ENCODE measurements at regions of chr15 and their contacts with region 1.

Region 1: DNA sequence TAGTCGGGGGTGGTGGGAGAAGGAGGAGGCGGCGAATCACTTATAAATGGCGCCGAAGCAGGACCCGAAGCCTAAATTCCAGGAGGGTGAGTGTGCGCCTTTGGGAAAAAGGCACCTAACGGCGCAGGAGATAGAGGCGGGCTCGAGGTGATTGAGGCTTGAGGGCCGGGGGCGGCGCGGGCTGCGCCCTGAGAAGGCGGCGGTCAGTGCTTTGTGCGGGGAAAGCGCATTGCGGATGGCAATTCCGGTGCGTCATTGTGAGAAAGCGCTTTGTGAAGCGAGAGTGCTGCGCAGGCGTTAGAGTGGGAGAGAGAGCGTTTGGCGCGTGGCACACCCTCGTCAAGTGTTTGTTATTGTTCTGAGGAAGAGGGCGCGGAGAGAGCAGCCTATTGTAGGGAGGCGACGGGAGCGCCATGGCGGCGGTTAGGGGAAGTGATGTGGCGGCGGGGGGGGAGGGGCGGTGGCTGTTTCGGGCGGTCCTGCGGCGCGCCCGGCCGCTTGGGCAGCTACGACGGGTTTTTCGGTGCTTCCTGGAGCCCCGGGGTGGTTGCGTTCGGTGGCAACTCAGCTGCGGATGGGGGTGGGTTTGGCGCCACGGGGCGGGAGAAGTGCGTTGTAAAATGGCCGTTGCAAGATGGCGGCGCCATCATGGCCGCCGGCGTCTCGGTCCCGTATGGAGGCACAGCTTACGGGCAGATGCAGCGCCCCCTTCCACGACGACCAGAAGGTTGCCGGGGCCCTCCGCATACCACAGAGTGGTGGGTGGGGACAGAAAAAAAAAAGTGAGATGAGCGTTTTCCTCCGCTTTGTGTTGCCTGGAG is 492 bp downstream of the MORF4L1 start:
- DNase-seq: peak; percentile 95
- H3K4me3 ChIP-seq: peak overlapping the region; percentile 89 to 100 (median 99)
- H3K27ac ChIP-seq: peak overlapping the region; percentile 100
- H3K4me1 ChIP-seq: peaks cover 41 to 46% (median 45%) of the 10 kb centered on the region in 4 donors
- H3K27me3 ChIP-seq: peaks cover 0 to 3% (median 0%) of the 10 kb centered on the region in 4 donors
- CTCF ChIP-seq: no peak
- EP300 ChIP-seq: no peak
- POLR2A ChIP-seq: peak; percentile 85

Region 2: DNA sequence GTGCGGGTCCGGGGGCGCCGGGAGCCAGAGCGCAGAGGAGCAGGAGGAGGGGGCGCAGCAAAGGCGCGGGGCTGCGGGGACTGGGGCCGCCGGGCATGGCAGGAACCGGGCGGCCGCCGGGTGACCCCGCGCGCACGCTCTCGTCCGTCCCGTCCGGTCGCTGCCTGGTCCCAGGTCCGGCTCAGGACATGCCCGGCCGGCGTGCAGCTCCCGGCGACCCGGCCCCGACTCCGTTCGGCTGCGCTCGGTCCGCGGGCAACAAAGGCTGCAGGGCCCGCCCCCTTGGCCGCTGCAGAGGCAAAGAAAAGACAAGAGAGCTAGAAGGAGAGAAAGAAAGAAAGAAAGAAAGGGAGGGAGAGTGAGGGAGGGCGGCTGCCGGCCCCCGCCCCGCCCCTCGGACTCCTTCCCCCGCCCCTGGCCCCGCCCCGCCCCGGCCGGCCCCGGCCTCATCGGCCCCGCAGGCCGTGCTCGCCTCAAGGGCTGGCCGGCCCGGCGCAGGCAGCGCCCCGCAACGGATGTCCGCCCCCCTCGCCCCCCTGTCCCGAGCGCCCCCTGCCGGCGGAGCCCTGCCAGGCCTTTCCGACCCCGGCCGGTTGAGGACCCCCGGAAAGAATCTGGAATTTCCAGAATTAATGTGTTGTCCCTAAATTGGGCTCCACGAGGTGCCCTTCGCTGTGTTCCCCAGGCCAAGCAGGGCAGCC is 61.9 kb before region 1 on chr15 and contains the start of gene ADAMTS7:
- intact Hi-C with region 1: loop called (anchors 5 kb)
- DNase-seq: no peak
- H3K4me3 ChIP-seq: peak within 1 kb of the TSS; percentile 67 to 82 (median 76)
- H3K27ac ChIP-seq: peak within 1 kb of the TSS; percentile 80 to 84 (median 82)
- H3K4me1 ChIP-seq: peaks cover 17 to 29% (median 24%) of the 10 kb centered on the region in 4 donors
- H3K27me3 ChIP-seq: no peaks in the 10 kb centered on the region
- CTCF ChIP-seq: peak; percentile 68 to 77 (median 73)
- EP300 ChIP-seq: no peak
- POLR2A ChIP-seq: no peak
- total RNA-seq, gene ADAMTS7: 2.0 to 4.6 (median 2.3) TPM

Measured in esophagus muscularis mucosa (tissue), 4 donors.